CD8-positive, alpha-beta memory T cell (primary cell): ENCODE measurements at regions of chr9 and their contacts with region 1.

Region 1: DNA sequence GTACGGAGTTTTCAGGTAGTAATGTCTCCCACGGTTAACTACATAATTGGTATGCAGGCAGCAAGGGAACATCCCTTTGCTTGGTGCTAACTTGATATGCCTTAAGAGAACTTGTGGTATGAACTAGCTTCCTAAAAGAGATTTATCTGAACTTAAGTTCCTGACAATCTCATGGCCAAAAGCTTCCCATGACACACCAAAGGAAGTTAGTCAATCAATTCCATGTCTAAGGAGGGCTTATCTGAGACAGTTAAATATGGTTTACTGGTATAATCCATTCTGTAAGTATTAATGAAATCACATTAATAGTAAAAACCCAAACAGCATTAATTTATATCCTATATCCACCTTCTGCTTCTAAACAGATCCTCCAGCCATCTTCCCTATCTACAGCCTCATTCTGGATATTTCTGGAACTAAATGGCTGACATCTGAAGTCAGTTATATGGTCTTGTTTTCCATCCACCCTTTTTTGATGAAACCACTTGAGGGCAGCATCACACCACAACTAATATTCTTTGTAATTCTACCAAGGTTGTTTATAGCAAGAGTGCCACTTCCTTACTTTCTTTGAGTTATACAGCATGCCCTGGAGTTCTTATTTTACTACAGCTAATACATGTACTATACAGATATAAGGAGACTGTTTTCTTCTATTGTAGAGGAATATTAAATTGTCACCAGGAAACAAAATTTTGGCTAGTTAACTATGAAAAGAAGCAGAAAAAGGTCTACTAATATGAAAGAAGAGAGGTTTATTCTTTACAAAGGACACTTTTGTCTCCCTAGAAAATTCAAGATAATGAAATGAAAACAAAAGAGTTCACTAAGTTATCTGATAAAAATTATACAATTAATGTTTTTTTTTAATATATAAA is 34.7 kb downstream of the SHOC1 start:
- DNase-seq: peak; percentile 4 to 59 (median 52)
- H3K4me3 ChIP-seq: no peak overlapping the region
- H3K4me3 Mint-ChIP-seq: no peak overlapping the region
- H3K27ac ChIP-seq: no peak overlapping the region
- H3K27ac Mint-ChIP-seq: no peak overlapping the region
- H3K4me1 ChIP-seq: peaks cover 6% of the 10 kb centered on the region
- H3K4me1 Mint-ChIP-seq: peaks cover 0 to 4% (median 3%) of the 10 kb centered on the region in 3 donors
- H3K27me3 ChIP-seq: no peaks in the 10 kb centered on the region
- H3K27me3 Mint-ChIP-seq: no peaks in the 10 kb centered on the region

Region 2: GRCh38 chr9:112074250-112075008 is 314.4 kb after region 1 on chr9:
- CTCF ChIA-PET with region 1: interaction called, 104 read pairs
- POLR2A ChIA-PET with region 1: no interaction called
- DNase-seq: peak; percentile 48 to 71 (median 52)
- H3K4me3 ChIP-seq: no peak overlapping the region
- H3K4me3 Mint-ChIP-seq: peak overlapping the region in 4 of 7 donors; percentile 24 to 65 (median 56)
- H3K27ac ChIP-seq: peak overlapping the region; percentile 32
- H3K27ac Mint-ChIP-seq: peak overlapping the region in 3 of 8 donors; percentile 4 to 76 (median 68)
- H3K4me1 ChIP-seq: peaks cover 20% of the 10 kb centered on the region
- H3K4me1 Mint-ChIP-seq: peaks cover 24 to 33% (median 24%) of the 10 kb centered on the region in 3 donors
- H3K27me3 ChIP-seq: no peaks in the 10 kb centered on the region
- H3K27me3 Mint-ChIP-seq: no peaks in the 10 kb centered on the region

Region 3: DNA sequence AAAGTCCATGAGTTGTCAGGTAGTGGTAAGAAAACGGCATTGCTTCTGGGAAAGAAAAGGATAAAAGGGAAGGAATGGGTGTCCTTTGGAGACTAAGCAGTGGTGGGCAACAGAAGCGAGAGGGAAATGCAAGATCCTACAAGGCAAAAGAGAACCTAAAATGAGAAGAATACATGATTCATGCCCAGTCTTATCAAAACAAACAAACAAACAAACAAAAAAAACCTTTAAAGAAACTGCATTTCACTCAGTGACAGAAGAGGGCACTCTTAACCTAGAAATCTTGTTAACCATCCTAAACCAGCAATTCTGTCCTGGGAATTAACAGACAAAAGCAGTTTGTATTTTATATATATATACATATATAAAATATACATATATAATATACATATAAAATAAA is 326.6 kb after region 1 on chr9:
- CTCF ChIA-PET with region 1: interaction called, 11 read pairs
- POLR2A ChIA-PET with region 1: no interaction called
- DNase-seq: no peak
- H3K4me3 ChIP-seq: no peak overlapping the region
- H3K4me3 Mint-ChIP-seq: no peak overlapping the region
- H3K27ac ChIP-seq: no peak overlapping the region
- H3K27ac Mint-ChIP-seq: no peak overlapping the region
- H3K4me1 ChIP-seq: no peaks in the 10 kb centered on the region
- H3K4me1 Mint-ChIP-seq: no peaks in the 10 kb centered on the region
- H3K27me3 ChIP-seq: no peaks in the 10 kb centered on the region
- H3K27me3 Mint-ChIP-seq: peaks cover 0 to 2% of the 10 kb centered on the region in 2 donors